Panc1 (cell line): ENCODE measurements at regions of chr6 and their contacts with region 1.

Region 1: GRCh38 chr6:35354361-35355135 is 12.2 kb downstream of the PPARD start:
- DNase-seq: no peak
- ATAC-seq: no peak
- H3K4me3 ChIP-seq: no peak overlapping the region
- H3K27ac ChIP-seq: no peak overlapping the region
- H3K4me1 ChIP-seq: no peaks in the 10 kb centered on the region
- H3K27me3 ChIP-seq: no peaks in the 10 kb centered on the region
- CTCF ChIP-seq: no peak

Region 2: DNA sequence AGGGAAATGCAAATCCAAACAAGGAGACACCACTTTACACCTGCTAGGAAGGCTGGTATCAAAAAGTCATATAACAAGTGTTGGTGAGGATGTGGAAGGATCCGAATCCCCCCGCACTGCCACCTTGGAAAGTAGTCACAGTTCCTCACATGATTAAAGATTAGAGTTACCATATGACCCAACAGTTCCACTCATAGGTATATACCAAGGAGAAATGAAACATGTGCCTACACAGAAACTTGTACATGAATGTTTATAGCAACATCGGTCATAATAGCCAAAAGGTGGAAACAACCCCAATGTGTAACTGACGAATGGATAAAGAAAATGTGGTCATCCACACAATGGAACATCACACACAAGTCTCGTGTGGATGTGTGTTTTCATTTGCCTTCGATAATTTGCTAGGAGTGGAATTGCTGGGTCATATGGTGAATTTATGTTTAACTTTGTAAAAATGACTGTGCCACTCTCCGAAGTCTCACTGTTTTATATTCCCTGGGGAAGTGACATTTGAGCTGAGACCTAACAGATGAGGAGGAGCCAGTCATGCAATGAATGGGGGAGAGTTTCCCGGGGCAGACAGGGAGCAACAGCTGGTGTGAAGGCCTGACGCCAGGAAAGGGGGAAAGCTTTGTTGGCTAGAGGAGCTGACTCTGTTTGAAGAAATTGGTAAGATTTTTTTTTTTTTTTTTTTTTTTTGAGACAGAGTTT is 1424.8 kb before region 1 on chr6:
- CTCF ChIA-PET with region 1: no interaction called
- POLR2A ChIA-PET with region 1: interaction called, 14 read pairs
- in situ Hi-C with region 1: no loop called
- intact Hi-C with region 1: no loop called
- DNase-seq: no peak
- ATAC-seq: no peak
- H3K4me3 ChIP-seq: no peak overlapping the region
- H3K27ac ChIP-seq: no peak overlapping the region
- H3K4me1 ChIP-seq: no peaks in the 10 kb centered on the region
- H3K27me3 ChIP-seq: peaks cover 2% of the 10 kb centered on the region; the same call in 1 of the 2 replicates
- CTCF ChIP-seq: no peak

Region 3: GRCh38 chr6:35485402-35485877 is 130.9 kb after region 1 on chr6:
- CTCF ChIA-PET with region 1: no interaction called
- POLR2A ChIA-PET with region 1: no interaction called
- in situ Hi-C with region 1: no loop called
- intact Hi-C with region 1: no loop called
- DNase-seq: no peak
- ATAC-seq: no peak
- H3K4me3 ChIP-seq: no peak overlapping the region
- H3K27ac ChIP-seq: no peak overlapping the region
- H3K4me1 ChIP-seq: peaks cover 19% of the 10 kb centered on the region
- H3K27me3 ChIP-seq: no peaks in the 10 kb centered on the region
- CTCF ChIP-seq: no peak

Region 4: DNA sequence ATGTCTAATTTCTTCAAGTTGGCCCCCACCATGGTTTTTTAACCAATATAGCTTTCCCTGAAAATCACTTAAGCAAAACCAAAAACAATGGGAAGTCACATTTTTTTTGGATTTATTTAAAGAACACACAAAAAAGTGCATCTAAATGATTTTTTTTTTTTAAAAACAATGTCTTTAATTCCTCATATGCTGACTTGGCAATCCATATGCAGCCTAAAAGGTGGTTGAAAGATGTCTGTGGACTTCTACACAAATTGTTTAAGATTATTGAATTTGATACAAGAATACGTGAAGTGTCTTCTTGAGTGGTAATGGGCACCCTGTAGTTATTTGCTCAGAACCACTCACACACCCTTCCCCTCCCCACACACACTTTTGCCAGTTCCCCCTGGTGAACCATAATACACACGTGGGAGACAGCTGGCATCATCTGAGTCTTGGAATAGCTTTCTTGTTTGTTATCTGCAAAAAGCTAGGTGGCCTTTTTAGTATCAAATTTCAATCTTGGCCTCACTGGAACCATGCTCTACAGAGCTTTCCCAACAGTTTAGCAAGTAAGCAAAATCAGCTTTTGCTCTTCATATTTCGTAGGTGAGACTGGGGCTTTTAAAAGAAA is 219.1 kb after region 1 on chr6:
- CTCF ChIA-PET with region 1: no interaction called
- POLR2A ChIA-PET with region 1: interaction called, 12 read pairs
- in situ Hi-C with region 1: no loop called
- intact Hi-C with region 1: no loop called
- DNase-seq: no peak
- ATAC-seq: no peak
- H3K4me3 ChIP-seq: no peak overlapping the region
- H3K27ac ChIP-seq: no peak overlapping the region
- H3K4me1 ChIP-seq: no peaks in the 10 kb centered on the region
- H3K27me3 ChIP-seq: no peaks in the 10 kb centered on the region
- CTCF ChIP-seq: no peak